CD8-positive, alpha-beta T cell (primary cell): ENCODE measurements at regions of chr5 and their contacts with region 1.

Region 1: DNA sequence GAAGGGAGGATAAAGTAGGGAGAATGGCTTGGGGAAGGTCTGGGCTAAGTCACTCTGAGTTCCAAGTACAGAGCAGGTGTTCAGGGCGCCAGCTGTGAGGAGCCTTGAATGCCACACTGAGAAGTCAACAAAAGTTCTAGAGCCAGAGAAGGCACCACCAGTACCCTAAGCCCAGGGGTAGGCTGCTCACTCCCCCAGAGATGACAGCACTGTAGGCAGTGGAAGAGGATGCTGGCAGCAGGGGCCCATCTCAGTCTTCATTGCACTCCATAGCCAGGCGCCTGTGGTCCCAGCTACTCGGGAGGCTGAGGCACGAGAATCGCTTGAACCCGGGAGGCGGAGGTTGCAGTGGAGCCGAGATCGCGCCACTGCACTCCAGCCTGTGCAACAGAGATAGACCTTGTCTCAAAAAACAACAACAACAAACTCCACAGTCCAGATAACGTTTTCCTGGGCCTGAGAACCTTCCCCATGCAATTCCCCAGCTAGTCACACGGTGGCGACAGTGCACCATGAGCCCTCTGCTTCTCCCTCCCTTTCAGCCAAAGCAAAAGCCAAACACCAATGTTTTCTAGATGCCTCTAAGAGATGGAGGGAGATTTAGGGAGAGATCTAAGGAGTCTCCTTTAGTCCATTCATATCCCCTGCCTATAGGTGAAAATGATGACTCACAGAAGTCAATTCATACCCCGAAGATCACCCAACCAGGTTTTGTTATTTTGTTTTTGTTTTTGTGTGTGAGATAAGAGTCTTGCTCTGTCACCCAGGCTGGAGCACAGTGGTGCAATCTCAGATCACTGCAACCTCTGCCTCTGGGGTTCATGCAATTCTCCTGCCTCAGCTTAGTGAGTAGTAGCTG is 19.8 kb upstream of the NSD1 start:
- DNase-seq: peak; percentile 68 to 89 (median 79)
- ATAC-seq: peak; percentile 68
- H3K4me3 ChIP-seq: no peak overlapping the region
- H3K4me3 Mint-ChIP-seq: no peak overlapping the region
- H3K27ac ChIP-seq: no peak overlapping the region
- H3K27ac Mint-ChIP-seq: no peak overlapping the region
- H3K4me1 ChIP-seq: peaks cover 14% of the 10 kb centered on the region
- H3K4me1 Mint-ChIP-seq: peaks cover 16% of the 10 kb centered on the region
- H3K27me3 ChIP-seq: no peaks in the 10 kb centered on the region
- H3K27me3 Mint-ChIP-seq: no peaks in the 10 kb centered on the region
- CTCF ChIP-seq: peak; percentile 99

Region 2: GRCh38 chr5:177071666-177072385 is 42.0 kb before region 1 on chr5:
- CTCF ChIA-PET with region 1: interaction called, 36 read pairs
- POLR2A ChIA-PET with region 1: interaction called, 3 read pairs
- intact Hi-C with region 1: loop called (anchors 1 to 2 kb)
- DNase-seq: peak; percentile 41 to 76 (median 70)
- ATAC-seq: peak; percentile 77
- H3K4me3 ChIP-seq: no peak overlapping the region
- H3K4me3 Mint-ChIP-seq: no peak overlapping the region
- H3K27ac ChIP-seq: no peak overlapping the region
- H3K27ac Mint-ChIP-seq: no peak overlapping the region
- H3K4me1 ChIP-seq: no peaks in the 10 kb centered on the region
- H3K4me1 Mint-ChIP-seq: peaks cover 8% of the 10 kb centered on the region
- H3K27me3 ChIP-seq: no peaks in the 10 kb centered on the region
- H3K27me3 Mint-ChIP-seq: no peaks in the 10 kb centered on the region
- CTCF ChIP-seq: peak; percentile 89

Region 3: DNA sequence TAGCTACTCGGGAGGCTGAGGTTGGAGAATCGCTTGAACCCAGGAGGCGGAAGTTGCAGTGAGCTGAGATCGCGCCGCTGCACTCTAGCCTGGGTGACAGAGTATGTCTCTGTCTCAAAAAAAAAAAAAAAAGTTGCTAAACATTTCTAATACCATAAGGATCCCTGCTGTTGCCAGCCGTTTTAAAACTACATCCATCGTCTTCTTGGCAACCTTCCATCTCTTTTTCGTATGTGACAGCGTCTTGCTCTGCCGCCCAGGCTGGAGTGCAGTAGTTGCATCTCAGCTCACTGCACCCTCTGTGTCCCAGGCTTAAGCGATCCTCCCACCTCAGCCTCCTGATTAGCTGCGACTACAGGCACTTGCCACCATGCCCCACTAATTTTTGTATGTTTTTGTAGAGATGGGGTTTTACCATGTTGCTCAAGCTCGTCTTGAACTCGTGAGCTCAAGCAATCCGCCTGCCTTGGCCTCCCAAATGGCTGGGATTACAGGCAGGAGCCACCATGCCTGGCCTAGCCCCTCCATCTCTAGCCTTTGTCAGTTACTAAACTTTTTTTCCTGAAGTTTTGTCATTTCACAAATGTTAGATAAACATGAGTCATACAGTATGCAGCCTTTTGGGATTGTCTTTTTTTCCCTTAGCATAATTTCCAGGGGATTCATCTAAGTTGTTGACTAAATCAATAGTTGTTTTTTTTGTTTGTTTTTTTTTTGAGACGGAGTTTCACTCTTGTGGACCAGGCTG is 33.3 kb after region 1 on chr5:
- CTCF ChIA-PET with region 1: interaction called, 56 read pairs
- POLR2A ChIA-PET with region 1: no interaction called
- intact Hi-C with region 1: loop called in 1 of 2 experiments (anchors 5 kb)
- DNase-seq: no peak
- ATAC-seq: no peak
- H3K4me3 ChIP-seq: no peak overlapping the region
- H3K4me3 Mint-ChIP-seq: no peak overlapping the region
- H3K27ac ChIP-seq: no peak overlapping the region
- H3K27ac Mint-ChIP-seq: no peak overlapping the region
- H3K4me1 ChIP-seq: no peaks in the 10 kb centered on the region
- H3K4me1 Mint-ChIP-seq: peaks cover 22% of the 10 kb centered on the region
- H3K27me3 ChIP-seq: no peaks in the 10 kb centered on the region
- H3K27me3 Mint-ChIP-seq: no peaks in the 10 kb centered on the region
- CTCF ChIP-seq: no peak

Region 4: DNA sequence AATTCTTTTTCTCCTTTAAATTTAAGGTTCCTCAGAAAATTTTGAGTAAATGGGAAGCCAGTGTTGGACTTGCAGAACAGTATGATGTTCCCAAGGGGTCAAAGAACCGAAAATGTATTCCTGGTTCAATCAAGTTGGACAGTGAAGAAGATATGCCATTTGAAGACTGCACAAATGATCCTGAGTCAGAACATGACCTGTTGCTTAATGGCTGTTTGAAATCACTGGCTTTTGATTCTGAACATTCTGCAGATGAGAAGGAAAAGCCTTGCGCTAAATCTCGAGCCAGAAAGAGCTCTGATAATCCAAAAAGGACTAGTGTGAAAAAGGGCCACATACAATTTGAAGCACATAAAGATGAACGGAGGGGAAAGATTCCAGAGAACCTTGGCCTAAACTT is 95.8 kb after region 1 on chr5:
- CTCF ChIA-PET with region 1: interaction called, 13 read pairs
- POLR2A ChIA-PET with region 1: no interaction called
- intact Hi-C with region 1: loop called (anchors 5 to 10 kb)
- DNase-seq: no peak
- ATAC-seq: no peak
- H3K4me3 ChIP-seq: no peak overlapping the region
- H3K4me3 Mint-ChIP-seq: no peak overlapping the region
- H3K27ac ChIP-seq: no peak overlapping the region
- H3K27ac Mint-ChIP-seq: no peak overlapping the region
- H3K4me1 ChIP-seq: no peaks in the 10 kb centered on the region
- H3K4me1 Mint-ChIP-seq: peaks cover 5% of the 10 kb centered on the region
- H3K27me3 ChIP-seq: no peaks in the 10 kb centered on the region
- H3K27me3 Mint-ChIP-seq: no peaks in the 10 kb centered on the region
- CTCF ChIP-seq: no peak

Region 5: DNA sequence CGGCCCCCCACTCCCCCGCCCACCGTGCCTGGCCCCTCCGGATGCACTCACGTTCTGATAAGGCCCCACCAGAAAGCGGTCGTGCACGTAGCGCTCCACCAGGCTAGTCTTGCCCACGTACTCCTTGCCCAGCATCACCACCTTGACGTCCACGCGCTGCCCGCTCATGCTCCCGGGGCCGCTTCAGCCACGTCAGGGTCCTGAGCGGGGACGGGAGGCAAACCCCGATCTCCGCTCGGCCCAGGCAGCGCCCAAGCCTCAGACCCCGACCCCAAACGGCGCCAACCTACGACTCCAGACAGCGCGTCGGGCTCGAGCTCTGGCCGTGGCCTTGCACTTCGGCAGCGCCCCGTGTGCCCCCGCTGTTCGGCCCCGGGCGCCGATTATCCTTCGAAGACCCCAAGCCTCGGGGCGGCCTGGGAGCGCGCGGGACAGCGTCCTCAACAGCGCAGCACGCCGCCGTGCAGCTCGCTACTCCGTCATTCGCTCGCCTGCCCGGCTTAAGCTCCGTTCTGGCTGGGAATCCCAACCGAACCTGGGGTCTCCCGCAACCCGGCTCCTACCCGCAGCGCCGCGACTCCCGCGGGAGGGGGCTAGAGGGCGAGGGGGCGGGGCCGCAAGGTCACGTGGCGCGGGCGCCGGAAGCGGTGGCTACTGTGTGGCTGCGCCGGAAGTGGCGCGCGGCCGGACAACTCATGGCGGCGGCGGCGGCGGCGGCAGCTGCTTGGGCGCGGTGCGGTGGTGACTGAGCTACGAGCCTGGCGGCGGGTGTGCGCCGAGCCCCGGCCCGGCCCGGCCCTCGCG is 189.5 kb after region 1 on chr5 and contains the starts of genes PRELID1 and RAB24:
- CTCF ChIA-PET with region 1: interaction called, 23 read pairs
- POLR2A ChIA-PET with region 1: no interaction called
- intact Hi-C with region 1: loop called in 1 of 2 experiments (anchors 5 kb)
- DNase-seq: peak; percentile 71 to 94 (median 88)
- ATAC-seq: peak; percentile 54
- H3K4me3 ChIP-seq: peak within 1 kb of the TSS; percentile 71 to 80
- H3K4me3 Mint-ChIP-seq: peak within 1 kb of the TSS; percentile 93
- H3K27ac ChIP-seq: peak within 1 kb of the TSS; percentile 71 to 78
- H3K27ac Mint-ChIP-seq: peak within 1 kb of the TSS; percentile 91
- H3K4me1 ChIP-seq: peaks cover 57% of the 10 kb centered on the region
- H3K4me1 Mint-ChIP-seq: peaks cover 65% of the 10 kb centered on the region
- H3K27me3 ChIP-seq: no peaks in the 10 kb centered on the region
- H3K27me3 Mint-ChIP-seq: no peaks in the 10 kb centered on the region
- CTCF ChIP-seq: no peak
- total RNA-seq, gene PRELID1: 15.5 to 23.7 TPM
- total RNA-seq, gene RAB24: 14.1 to 19.8 TPM

Region 6: GRCh38 chr5:177454397-177455035 is 340.7 kb after region 1 on chr5:
- CTCF ChIA-PET with region 1: no interaction called
- POLR2A ChIA-PET with region 1: no interaction called
- intact Hi-C with region 1: loop called in 1 of 2 experiments (anchors 5 kb)
- DNase-seq: peak; percentile 90 to 98 (median 94)
- ATAC-seq: peak; percentile 55
- H3K4me3 ChIP-seq: peak overlapping the region; percentile 64 to 93
- H3K4me3 Mint-ChIP-seq: peak overlapping the region; percentile 86
- H3K27ac ChIP-seq: peak overlapping the region; percentile 88 to 96
- H3K27ac Mint-ChIP-seq: peak overlapping the region; percentile 85
- H3K4me1 ChIP-seq: peaks cover 16% of the 10 kb centered on the region
- H3K4me1 Mint-ChIP-seq: peaks cover 18% of the 10 kb centered on the region
- H3K27me3 ChIP-seq: no peaks in the 10 kb centered on the region
- H3K27me3 Mint-ChIP-seq: no peaks in the 10 kb centered on the region
- CTCF ChIP-seq: peak; percentile 84